Spleen (tissue), 13 donors: ENCODE measurements at regions of chr17 and their contacts with region 1.

Region 1: GRCh38 chr17:40803617-40804082 is 3.9 kb upstream of the KRT28 start:
- DNase-seq: peak; percentile 90
- H3K4me3 ChIP-seq: no peak overlapping the region
- H3K27ac ChIP-seq: no peak overlapping the region
- H3K4me1 ChIP-seq: peaks cover 0 to 7% (median 0%) of the 10 kb centered on the region in 6 donors
- H3K27me3 ChIP-seq: peaks cover 0 to 79% (median 18%) of the 10 kb centered on the region in 7 donors
- CTCF ChIP-seq: peak; percentile 71 to 93 (median 82)
- POLR2A ChIP-seq: no peak

Region 2: DNA sequence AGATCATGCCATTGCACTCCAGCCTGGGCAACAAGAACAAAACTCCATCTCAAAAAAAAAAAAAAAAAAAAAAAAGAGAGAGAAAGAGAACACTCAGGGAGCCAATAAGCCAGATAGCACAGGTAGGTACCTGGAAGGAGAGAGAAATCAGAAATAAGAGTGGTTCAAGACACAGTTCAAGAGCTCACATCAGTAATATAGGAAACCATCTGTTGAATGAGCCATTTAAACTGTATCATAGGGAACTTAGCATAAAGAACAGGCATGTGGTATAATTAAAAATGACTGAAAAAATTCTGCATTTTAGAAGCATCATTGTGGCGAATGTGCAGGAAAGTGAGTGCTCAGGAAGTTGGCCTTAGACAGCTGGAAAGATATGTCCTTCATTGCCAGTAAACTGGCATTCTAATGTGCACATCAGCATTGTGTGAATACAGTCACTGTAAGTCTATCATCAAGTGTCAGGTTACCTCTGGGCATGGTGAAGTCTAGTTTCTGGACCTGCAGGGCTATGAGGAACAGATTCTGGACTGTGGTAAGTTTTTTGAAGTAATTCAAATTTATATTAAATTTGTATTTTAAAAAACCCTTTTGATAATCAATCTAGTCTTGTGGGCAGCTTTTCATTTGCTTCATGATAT is 43.0 kb after region 1 on chr17:
- intact Hi-C with region 1: no loop called
- DNase-seq: no peak
- H3K4me3 ChIP-seq: no peak overlapping the region
- H3K27ac ChIP-seq: no peak overlapping the region
- H3K4me1 ChIP-seq: no peaks in the 10 kb centered on the region
- H3K27me3 ChIP-seq: peaks cover 0 to 29% (median 0%) of the 10 kb centered on the region in 7 donors
- CTCF ChIP-seq: no peak
- POLR2A ChIP-seq: no peak

Region 3: GRCh38 chr17:40956401-40957254 is 153.0 kb after region 1 on chr17:
- intact Hi-C with region 1: no loop called
- DNase-seq: no peak
- H3K4me3 ChIP-seq: no peak overlapping the region
- H3K27ac ChIP-seq: no peak overlapping the region
- H3K4me1 ChIP-seq: no peaks in the 10 kb centered on the region
- H3K27me3 ChIP-seq: peaks cover 0 to 25% (median 0%) of the 10 kb centered on the region in 7 donors
- CTCF ChIP-seq: no peak
- POLR2A ChIP-seq: no peak

Region 4: DNA sequence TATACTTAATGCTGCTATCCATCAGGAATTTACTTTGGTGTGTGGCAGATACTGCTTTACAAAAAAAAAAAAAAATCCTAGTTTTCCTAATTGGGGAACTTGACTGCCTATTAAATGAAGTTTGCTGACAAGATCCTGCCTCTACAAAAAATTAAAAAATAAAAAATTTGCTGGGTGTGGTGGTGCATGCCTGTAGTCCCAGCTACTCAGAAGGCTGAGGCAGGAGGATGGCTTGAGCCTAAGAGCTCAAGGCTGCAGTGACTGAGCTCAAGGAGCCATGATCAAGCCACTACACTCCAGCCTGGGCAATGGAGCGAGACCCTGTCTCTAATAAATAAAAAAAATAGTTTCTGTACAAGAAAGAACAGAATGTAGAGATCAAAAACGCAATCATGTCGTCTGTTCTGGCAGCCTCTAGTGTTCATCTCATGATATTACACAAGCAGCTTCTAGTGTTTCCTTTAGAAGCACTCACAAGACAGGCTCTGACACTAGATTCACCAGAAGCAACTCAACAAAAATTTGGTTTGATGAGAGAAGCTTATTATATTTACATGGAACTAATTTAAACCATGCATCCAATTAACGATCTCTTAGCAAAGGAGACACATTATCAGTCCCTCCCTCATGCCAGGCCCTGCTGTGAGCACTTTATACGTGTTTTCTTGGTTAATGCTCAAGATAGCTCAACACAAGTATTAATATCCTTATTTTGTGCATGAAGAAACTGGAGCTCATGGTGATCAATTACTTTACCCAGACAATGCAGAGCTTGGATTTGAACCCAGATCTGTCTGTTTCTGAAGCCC is 518.6 kb after region 1 on chr17:
- intact Hi-C with region 1: loop called (anchors 10 kb)
- DNase-seq: no peak
- H3K4me3 ChIP-seq: no peak overlapping the region
- H3K27ac ChIP-seq: no peak overlapping the region
- H3K4me1 ChIP-seq: peaks cover 0 to 6% (median 0%) of the 10 kb centered on the region in 6 donors
- H3K27me3 ChIP-seq: no peaks in the 10 kb centered on the region
- CTCF ChIP-seq: peak; percentile 59 to 82 (median 75)
- POLR2A ChIP-seq: no peak

Region 5: GRCh38 chr17:41648411-41649195 is 845.0 kb after region 1 on chr17:
- intact Hi-C with region 1: loop called (anchors 5 kb)
- DNase-seq: peak; percentile 96
- H3K4me3 ChIP-seq: peak overlapping the region in 7 of 8 donors; percentile 25 to 68 (median 37)
- H3K27ac ChIP-seq: peak overlapping the region in 4 of 8 donors; percentile 46 to 67 (median 49)
- H3K4me1 ChIP-seq: peaks cover 10 to 37% (median 15%) of the 10 kb centered on the region in 6 donors
- H3K27me3 ChIP-seq: no peaks in the 10 kb centered on the region
- CTCF ChIP-seq: peak; percentile 80 to 94 (median 90)
- POLR2A ChIP-seq: no peak